Gastrocnemius medialis (tissue), 4 donors: ENCODE measurements at regions of chr13 and their contacts with region 1.

Region 1: DNA sequence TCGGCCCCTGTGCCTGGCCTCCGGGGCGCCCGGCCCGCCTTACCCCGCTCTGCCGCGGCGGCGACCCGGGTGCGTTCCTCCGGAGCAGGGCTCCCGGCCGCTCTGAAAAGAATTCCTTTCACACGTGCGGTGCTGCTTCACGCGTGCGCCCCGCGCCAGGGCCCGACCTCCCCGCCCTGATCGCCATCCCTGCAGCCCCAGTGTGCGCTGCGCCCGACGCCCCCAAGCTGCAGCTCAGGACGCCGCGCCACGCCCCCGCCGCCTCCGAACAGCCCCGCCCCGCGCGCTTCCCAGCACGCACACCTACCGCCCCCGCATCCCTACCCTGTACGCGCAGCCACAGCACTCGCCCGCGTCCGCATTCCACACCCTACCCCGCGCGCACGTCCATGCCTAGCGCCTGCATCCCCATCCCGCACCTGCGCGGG is at the start of gene GJA3:
- DNase-seq: no peak
- ATAC-seq: no peak
- H3K4me3 ChIP-seq: peak within 1 kb of the TSS in 3 of 4 donors; percentile 32 to 40 (median 34)
- H3K27ac ChIP-seq: no peak within 1 kb of the TSS
- H3K4me1 ChIP-seq: no peaks in the 10 kb centered on the region
- H3K27me3 ChIP-seq: peaks cover 69% of the 10 kb centered on the region in 3 donors
- CTCF ChIP-seq: no peak
- POLR2A ChIP-seq: no peak
- total RNA-seq, gene GJA3: not detected

Region 2: DNA sequence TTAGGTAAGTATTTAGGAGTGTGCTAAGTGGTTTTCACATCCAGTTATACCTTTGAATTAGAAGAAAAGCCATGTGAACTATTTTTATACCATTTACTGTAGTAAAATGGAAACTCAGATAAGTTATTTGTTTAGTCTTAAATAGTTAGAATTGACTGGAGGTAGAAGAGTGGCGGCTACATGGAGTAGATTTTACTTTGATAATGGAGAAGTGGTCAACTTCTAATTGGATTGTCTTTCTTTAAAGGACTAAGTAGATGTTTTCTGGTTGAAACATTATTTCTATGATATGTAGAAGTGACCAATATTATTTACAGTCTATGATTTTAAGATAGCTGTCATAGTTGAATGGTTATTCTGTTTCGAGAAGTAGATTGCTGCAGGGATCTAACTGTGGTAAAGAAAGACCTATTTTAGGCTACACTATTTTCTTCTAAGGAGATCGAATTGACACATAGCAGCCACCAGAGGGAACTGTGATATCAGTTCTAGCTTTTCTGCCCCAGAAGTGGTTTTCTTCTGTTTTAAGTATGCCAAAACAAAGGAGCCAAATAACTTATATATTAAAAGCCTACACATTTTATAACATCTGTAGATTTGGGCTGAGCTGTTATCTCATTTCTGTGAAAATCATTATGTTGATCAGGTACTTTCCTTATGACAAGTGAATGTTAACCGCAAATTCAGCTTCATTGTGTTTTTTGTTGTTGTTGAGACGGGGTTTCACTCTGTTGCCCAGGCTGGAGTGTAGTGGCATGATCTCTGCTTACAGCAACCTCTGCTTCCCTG is 176.2 kb before region 1 on chr13:
- in situ Hi-C with region 1: loop called in 1 of 4 experiments (anchors 25 kb)
- intact Hi-C with region 1: loop called (anchors 5 kb)
- DNase-seq: no peak
- ATAC-seq: no peak
- H3K4me3 ChIP-seq: no peak overlapping the region
- H3K27ac ChIP-seq: no peak overlapping the region
- H3K4me1 ChIP-seq: peaks cover 14 to 15% of the 10 kb centered on the region in 2 donors
- H3K27me3 ChIP-seq: no peaks in the 10 kb centered on the region
- CTCF ChIP-seq: peak in 4 of 5 experiments; percentile 22 to 52 (median 31)
- POLR2A ChIP-seq: no peak

Region 3: GRCh38 chr13:20127577-20128466 is 33.0 kb before region 1 on chr13:
- in situ Hi-C with region 1: no loop called
- intact Hi-C with region 1: loop called (anchors 2 kb)
- DNase-seq: peak; percentile 47 to 60
- ATAC-seq: peak; percentile 80 to 83
- H3K4me3 ChIP-seq: peak overlapping the region; percentile 58 to 69 (median 66)
- H3K27ac ChIP-seq: peak overlapping the region; percentile 71 to 79 (median 72)
- H3K4me1 ChIP-seq: peaks cover 15 to 16% of the 10 kb centered on the region in 2 donors
- H3K27me3 ChIP-seq: no peaks in the 10 kb centered on the region
- CTCF ChIP-seq: peak in 3 of 5 experiments; percentile 25 to 58 (median 51)
- POLR2A ChIP-seq: peak in 1 of 2 donors; percentile 35